ENCODE measurements at regions of chr11 and their contacts with region 1.

Region 1: GRCh38 chr11:59171508-59172322 is at the start of gene DTX4:
- DNase-seq: peak; percentile 91 to 97 (median 96)
- ATAC-seq: peak; percentile 90 to 94 (median 91)
- H3K4me3 ChIP-seq: peak within 1 kb of the TSS; percentile 54 to 77 (median 68)
- H3K27ac ChIP-seq: peak within 1 kb of the TSS; percentile 53 to 76 (median 63)
- H3K4me1 ChIP-seq: no peaks in the 10 kb centered on the region
- H3K27me3 ChIP-seq: no peaks in the 10 kb centered on the region
- CTCF ChIP-seq: peak; percentile 69 to 89 (median 86)
- total RNA-seq, gene DTX4: 5.9 to 16.3 (median 8.3) TPM

Region 2: DNA sequence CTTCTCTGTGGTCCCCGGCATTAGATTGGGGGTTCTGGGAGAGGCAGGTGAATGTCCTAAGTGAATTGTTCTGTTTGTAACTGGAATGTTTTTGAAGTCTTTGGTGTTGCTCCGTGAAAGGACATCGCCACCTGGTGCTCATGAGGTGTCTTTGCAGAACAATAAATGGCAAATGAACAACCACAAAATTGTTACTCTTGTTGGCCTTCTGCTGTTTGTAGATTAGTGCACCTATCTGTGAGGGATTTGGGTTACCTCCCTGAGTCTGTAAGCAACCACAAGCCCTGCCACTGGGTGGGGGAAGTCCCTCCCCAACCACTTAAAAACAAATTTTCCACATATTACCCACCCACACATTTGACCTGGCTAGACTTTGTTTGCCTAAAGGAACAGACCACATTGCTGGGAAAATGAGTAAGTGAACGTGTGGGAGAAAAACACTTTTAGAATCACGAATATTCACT is 36.3 kb after region 1 on chr11:
- intact Hi-C with region 1: loop called in 1 of 3 experiments (anchors 5 kb)
- DNase-seq: peak in 2 of 6 donors; percentile 26 to 32
- ATAC-seq: peak; percentile 79 to 83 (median 80)
- H3K4me3 ChIP-seq: peak overlapping the region in 1 of 4 donors; percentile 2
- H3K27ac ChIP-seq: peak overlapping the region in 1 of 4 donors; percentile 19
- H3K4me1 ChIP-seq: peaks cover 0 to 5% (median 0%) of the 10 kb centered on the region in 3 donors
- H3K27me3 ChIP-seq: no peaks in the 10 kb centered on the region
- CTCF ChIP-seq: peak; percentile 29 to 61 (median 52)

Region 3: DNA sequence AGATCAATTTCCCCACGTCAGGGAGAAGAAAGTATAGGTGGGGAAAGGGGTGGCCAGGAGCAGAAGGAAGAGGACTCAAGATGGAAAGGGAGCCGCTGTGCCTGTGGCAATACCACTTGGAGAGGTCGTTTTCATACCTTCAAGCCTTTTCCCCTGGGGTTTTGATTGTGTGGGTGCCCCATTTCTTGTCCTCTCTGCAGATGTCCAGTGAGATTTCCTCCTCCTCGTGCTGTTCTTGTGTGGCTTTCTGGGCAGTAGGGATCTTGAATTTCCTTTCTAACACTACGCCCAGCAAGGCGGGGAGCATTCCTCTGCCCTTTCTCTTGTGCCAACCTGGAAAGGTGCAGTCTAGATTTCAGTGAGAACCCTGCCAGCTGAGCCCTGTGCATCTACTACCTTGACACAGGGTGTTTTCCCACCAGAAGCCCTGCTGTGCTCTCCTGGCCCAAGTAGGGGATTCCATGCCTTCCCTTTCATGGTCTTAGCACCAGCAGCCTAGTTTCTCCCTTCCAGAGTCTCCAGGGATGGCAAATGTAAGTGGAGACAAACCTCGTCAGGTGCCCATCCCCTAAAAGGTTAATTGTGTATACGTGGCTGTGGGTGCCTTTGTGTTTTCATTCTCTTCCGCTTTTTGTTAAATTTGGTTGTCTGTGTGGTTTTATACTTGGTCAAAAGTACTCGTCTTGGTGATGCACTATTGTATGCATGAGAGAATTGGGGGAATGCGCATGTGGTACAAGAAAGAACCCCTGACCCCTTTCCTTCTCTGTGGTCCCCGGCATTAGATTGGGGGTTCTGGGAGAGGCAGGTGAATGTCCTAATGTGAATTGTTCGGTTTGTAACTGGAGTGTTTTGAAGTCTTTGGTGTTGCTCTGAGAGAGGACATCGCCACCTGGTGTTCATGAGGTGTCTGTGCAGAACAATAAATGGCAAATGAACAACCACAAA is 112.4 kb after region 1 on chr11:
- intact Hi-C with region 1: loop called in 2 of 3 experiments (anchors 10 kb)
- DNase-seq: peak in 1 of 6 donors; percentile 38
- ATAC-seq: peak; percentile 80 to 88 (median 86)
- H3K4me3 ChIP-seq: no peak overlapping the region
- H3K27ac ChIP-seq: peak overlapping the region in 1 of 4 donors; percentile 18
- H3K4me1 ChIP-seq: peaks cover 0 to 18% (median 0%) of the 10 kb centered on the region in 3 donors
- H3K27me3 ChIP-seq: no peaks in the 10 kb centered on the region
- CTCF ChIP-seq: peak; percentile 59 to 73 (median 66)

Region 4: DNA sequence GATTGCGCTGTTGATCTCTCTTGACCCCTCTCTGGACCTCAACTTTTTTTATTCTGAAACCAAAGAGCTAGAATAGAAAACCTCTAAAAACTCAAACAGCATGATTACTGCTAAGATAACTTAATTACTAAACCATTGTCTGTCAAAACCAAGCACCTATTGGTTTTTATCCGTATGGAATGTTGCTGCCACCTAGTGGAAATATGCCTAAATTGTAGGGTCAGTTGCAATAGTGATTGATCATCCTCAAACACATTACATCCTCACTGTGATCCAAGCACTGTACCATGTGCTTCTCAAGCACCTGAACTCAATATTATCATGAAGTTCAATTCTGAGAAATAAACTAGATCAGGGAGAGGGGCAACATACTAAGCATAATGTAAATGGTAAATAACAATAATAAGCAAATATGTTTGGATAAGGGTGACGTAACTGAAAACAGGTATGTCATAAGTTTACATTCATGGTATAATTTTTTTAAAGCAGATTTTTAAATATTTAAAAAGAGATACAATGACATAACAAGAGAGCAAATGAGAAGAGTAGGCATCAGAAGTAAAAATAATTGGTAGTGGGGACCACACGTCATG is 258.3 kb after region 1 on chr11:
- intact Hi-C with region 1: loop called in 1 of 3 experiments (anchors 10 kb)
- DNase-seq: peak in 3 of 6 donors; percentile 8 to 42 (median 20)
- ATAC-seq: peak; percentile 67 to 90 (median 80)
- H3K4me3 ChIP-seq: no peak overlapping the region
- H3K27ac ChIP-seq: no peak overlapping the region
- H3K4me1 ChIP-seq: peaks cover 0 to 3% (median 0%) of the 10 kb centered on the region in 3 donors
- H3K27me3 ChIP-seq: no peaks in the 10 kb centered on the region
- CTCF ChIP-seq: peak; percentile 45 to 80 (median 73)

Region 5: DNA sequence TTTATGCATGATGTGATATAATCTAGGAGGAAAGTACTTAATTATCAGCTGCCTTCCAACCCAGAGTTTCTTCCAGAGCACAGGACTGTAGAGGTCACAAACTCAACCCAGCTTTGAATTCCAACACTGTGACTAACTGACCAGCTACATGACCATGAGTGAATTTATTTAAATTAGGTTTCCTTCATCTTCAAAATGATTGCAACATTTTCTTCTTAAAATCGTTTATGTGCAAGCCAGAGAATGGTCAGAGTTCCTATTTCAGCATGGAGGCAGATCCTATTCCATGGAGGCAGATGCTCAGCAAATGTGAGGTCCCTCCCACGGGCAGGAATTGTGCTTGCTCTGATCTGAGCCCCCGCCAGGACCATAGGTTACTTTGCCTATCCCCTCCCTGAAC is 401.5 kb after region 1 on chr11:
- intact Hi-C with region 1: no loop called
- DNase-seq: no peak
- ATAC-seq: peak in 2 of 4 donors; percentile 40 to 59
- H3K4me3 ChIP-seq: no peak overlapping the region
- H3K27ac ChIP-seq: no peak overlapping the region
- H3K4me1 ChIP-seq: no peaks in the 10 kb centered on the region
- H3K27me3 ChIP-seq: no peaks in the 10 kb centered on the region
- CTCF ChIP-seq: no peak

Measured in pancreas (tissue), 10 donors.